AG04449 (cell line): ENCODE measurements at regions of chr19 and their contacts with region 1.

Region 1: DNA sequence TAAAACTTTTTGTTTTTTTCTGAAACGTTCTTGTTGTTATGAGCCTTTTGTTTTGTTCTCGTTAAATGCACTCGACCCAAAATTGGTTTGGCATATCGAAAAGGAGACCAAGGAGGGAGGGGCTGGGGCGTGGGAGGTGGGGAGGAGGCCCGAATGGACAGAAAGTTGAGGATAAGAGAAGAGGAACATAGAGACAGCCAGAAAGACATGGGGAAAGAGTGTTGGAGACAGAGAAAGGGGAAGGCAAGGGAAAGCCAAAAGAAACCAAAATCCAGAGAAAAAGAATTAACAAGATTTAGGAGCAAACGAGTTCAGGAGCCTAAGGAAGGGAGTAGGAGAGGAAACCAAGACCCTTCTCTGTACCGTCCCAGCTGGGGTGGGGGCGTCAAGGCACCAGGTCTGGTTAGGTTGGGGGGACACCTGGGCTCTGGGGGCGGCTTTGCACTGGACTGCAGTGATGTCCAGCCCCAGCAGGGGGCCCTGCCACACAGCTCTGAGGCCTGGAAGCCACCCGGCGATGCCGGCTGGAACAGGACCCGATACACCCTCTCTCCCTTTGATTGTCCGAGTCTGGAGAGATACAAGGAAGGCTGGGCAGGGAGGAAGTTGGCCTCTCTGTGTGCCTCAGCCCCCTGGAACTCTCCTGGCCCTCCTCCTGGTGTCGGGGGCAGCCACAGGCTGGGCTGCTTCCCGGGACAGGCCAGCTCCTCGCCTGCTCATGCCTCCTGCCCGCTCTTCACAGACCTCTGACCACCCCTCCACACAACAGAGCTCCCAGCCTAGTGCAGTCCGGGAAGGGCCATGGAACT is 11.6 kb upstream of the ASF1B start:
- DNase-seq: no peak
- H3K4me3 ChIP-seq: no peak overlapping the region
- CTCF ChIP-seq: peak; percentile 91

Region 2: GRCh38 chr19:13451434-13451995 is 696.5 kb before region 1 on chr19:
- CTCF ChIA-PET with region 1: no interaction called
- POLR2A ChIA-PET with region 1: no interaction called
- DNase-seq: no peak
- H3K4me3 ChIP-seq: no peak overlapping the region
- CTCF ChIP-seq: no peak

Region 3: DNA sequence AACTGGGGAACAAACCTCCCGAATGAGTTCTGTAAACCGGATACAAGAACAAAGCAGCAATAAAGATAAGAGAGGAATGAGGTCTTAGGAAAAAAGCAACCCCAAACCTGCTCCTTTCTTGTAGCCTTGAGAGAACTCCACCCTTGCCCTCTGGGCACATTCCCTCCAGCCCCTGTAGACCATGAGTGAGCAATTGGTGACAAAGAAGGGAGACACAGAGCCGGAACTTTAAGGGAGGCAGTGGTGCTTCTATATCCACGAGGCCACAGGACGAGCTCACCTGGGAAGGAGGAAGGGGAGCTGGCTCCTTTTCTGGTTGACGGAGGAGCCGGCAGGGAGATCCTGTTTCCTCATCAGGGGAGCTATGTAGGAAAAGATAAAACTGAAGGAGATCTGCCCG is 255.1 kb before region 1 on chr19:
- CTCF ChIA-PET with region 1: no interaction called
- POLR2A ChIA-PET with region 1: no interaction called
- DNase-seq: no peak
- H3K4me3 ChIP-seq: no peak overlapping the region
- CTCF ChIP-seq: no peak

Region 4: GRCh38 chr19:14081325-14082093 is 66.5 kb before region 1 on chr19:
- CTCF ChIA-PET with region 1: no interaction called
- POLR2A ChIA-PET with region 1: no interaction called
- DNase-seq: peak; percentile 93
- H3K4me3 ChIP-seq: peak overlapping the region; percentile 81
- CTCF ChIP-seq: no peak

Region 5: GRCh38 chr19:14160017-14160703 is 12.2 kb after region 1 on chr19:
- CTCF ChIA-PET with region 1: interaction called, 34 read pairs
- POLR2A ChIA-PET with region 1: no interaction called
- DNase-seq: no peak
- H3K4me3 ChIP-seq: no peak overlapping the region
- CTCF ChIP-seq: no peak

Region 6: GRCh38 chr19:14265290-14266036 is 117.5 kb after region 1 on chr19:
- CTCF ChIA-PET with region 1: no interaction called
- POLR2A ChIA-PET with region 1: no interaction called
- DNase-seq: no peak
- H3K4me3 ChIP-seq: no peak overlapping the region
- CTCF ChIP-seq: no peak